Activated T-helper 1 cell treated with anti-CD3 and anti-CD28 coated beads, Interleukin-12 subunit alpha, Interleukin-12 subunit beta, Interleukin-2, Interleukin-4 antibody, amounts not matched to agents 30 ng/mL and 10 ng/mL and 1 ng/mL, durations not matched to agents 14 hours and 24 hours and 36 hours (primary cell): ENCODE measurements at regions of chr15 and their contacts with region 1.

Region 1: DNA sequence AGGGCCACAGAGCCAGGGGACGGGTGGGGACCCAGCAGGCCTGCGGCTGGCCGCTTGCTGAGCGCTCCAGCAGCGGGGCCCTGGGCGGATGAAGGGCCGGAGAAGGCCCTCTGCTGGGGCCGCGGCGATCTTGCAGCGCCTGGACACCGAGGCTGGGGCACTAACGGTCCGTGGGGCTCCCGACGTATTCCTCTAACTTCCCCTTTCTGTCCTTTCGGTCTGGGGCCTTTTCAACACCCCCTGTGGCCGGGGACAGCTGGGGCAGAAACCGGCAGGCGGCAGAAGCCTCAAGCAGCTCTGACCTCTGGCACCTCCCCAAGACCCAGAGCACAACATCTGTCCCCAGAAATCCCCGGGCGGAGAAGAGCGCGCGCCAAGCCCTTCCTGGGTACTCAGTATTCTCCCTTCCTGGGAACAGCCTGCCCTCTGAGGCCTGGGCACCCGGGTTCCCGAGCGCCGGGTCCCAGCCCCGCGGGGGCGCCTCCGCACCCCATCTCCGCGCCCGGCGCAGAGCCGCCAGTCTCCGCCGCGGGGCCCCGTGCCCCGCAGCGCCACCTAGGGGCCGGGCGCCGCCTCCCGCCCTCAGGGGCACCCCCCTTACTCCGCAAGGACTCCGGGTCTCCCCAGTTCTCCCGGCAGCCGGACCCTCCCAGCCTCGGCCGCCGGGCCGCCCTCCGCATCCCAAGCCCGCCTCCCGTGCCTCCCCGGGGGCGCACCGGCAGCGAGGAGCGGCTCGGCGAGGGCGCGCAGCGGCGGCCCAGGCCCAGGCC is 582 bp upstream of the SLCO3A1 start:
- DNase-seq: peak; percentile 74
- H3K4me3 Mint-ChIP-seq: peak overlapping the region; percentile 82
- H3K27ac Mint-ChIP-seq: peak overlapping the region; percentile 80
- H3K4me1 Mint-ChIP-seq: peaks cover 61% of the 10 kb centered on the region
- H3K27me3 Mint-ChIP-seq: peaks cover 9% of the 10 kb centered on the region

Region 2: GRCh38 chr15:90994417-90995311 is 858.3 kb before region 1 on chr15 and contains the start of gene PRC1:
- intact Hi-C with region 1: loop called (anchors 10 kb)
- DNase-seq: peak; percentile 99
- H3K4me3 Mint-ChIP-seq: peak within 1 kb of the TSS; percentile 100
- H3K27ac Mint-ChIP-seq: peak within 1 kb of the TSS; percentile 100
- H3K4me1 Mint-ChIP-seq: peaks cover 42% of the 10 kb centered on the region
- H3K27me3 Mint-ChIP-seq: no peaks in the 10 kb centered on the region
- total RNA-seq, gene PRC1: 78.4 and 86.0 TPM in 2 replicates

Region 3: DNA sequence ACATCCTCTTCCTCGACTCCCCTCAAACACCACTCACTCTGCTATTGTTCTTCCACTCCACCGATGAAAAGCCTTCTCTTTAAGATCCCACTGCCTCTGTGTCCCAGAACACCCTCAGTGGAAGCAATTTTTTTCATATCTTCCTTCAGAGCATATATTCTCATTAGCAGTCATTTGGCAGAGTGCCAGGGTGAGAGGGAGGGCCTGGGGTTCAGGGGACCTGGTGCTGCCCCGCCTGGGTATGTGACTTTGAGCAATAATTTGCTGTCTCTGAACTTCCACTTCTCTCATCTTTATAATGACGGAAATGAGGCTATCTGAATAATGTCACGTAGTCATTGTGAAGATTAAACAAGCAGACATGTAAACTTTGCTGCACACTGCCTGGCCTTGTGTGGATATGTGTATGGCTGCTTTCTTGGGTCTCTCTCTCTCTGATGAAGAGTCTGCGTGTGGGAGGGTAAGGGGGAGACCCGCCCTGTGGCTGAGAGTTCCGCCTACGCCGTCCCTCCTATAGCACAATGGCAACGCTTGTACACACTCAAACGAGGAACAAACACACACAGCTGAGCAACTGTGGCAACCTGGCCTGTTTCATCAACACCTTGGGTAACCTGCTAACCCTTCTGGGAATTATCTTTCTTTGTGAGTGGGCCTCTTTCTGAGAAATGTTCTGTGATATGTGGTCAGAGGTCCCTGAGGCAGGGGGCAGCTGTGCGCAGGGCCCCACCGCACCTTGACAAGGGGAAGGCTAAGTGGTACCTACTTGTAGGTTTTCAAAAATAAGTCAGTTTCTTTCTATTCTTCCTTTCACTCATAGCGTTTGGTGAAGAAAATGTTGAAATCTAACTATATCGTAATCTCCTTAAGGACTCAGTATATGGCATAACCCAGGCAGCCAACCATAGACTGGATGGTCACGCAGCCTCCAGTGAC is 383.0 kb before region 1 on chr15:
- intact Hi-C with region 1: loop called (anchors 1 kb)
- DNase-seq: peak; percentile 63
- H3K4me3 Mint-ChIP-seq: peak overlapping the region; percentile 1
- H3K27ac Mint-ChIP-seq: peak overlapping the region; percentile 67
- H3K4me1 Mint-ChIP-seq: peaks cover 50% of the 10 kb centered on the region
- H3K27me3 Mint-ChIP-seq: no peaks in the 10 kb centered on the region

Region 4: GRCh38 chr15:91921188-91921842 is 68.4 kb after region 1 on chr15:
- intact Hi-C with region 1: loop called (anchors 5 kb)
- DNase-seq: no peak
- H3K4me3 Mint-ChIP-seq: peak overlapping the region; percentile 31
- H3K27ac Mint-ChIP-seq: peak overlapping the region; percentile 50
- H3K4me1 Mint-ChIP-seq: peaks cover 38% of the 10 kb centered on the region
- H3K27me3 Mint-ChIP-seq: no peaks in the 10 kb centered on the region

Region 5: GRCh38 chr15:91936182-91936775 is 83.4 kb after region 1 on chr15:
- intact Hi-C with region 1: no loop called
- DNase-seq: no peak
- H3K4me3 Mint-ChIP-seq: no peak overlapping the region
- H3K27ac Mint-ChIP-seq: no peak overlapping the region
- H3K4me1 Mint-ChIP-seq: peaks cover 22% of the 10 kb centered on the region
- H3K27me3 Mint-ChIP-seq: no peaks in the 10 kb centered on the region

Region 6: GRCh38 chr15:92011611-92012367 is 158.9 kb after region 1 on chr15:
- intact Hi-C with region 1: loop called (anchors 2 kb)
- DNase-seq: no peak
- H3K4me3 Mint-ChIP-seq: no peak overlapping the region
- H3K27ac Mint-ChIP-seq: peak overlapping the region; percentile 50
- H3K4me1 Mint-ChIP-seq: peaks cover 46% of the 10 kb centered on the region
- H3K27me3 Mint-ChIP-seq: peaks cover 2% of the 10 kb centered on the region

Region 7: DNA sequence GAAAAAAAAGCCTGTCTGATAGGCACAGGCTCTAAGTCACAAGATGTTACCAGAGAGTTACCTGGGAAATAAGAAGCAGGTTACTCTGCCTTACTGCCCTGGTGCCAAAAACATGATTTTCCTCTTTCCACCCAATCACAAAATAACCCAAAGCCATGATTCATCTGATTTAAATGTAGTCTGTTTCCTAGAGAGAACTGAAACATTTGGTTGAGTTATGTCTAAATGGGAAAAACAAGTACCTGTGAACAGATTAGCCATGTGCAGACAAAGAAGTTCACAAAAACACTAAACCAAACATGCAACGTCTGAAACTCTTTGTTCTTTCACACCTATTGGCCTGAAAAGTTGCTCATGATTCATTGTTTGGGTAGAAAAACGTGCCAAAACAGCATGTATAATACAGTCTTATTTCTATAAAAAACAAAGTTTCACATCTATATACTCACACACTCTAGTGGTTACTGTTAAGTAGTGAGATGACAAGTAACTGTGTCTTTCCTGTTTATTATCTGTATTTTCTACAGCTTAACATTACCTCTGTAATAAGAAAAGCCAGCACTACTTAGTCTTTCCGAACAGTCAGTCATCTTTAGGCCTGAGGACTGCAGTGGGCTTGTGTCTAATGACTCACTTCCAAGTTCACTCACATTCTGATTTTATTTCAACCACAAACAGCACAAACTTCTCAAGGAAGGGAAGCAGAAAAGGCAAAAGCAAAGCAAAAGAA is 772.5 kb after region 1 on chr15:
- intact Hi-C with region 1: loop called (anchors 10 kb)
- DNase-seq: no peak
- H3K4me3 Mint-ChIP-seq: peak overlapping the region; percentile 27
- H3K27ac Mint-ChIP-seq: peak overlapping the region; percentile 74
- H3K4me1 Mint-ChIP-seq: peaks cover 15% of the 10 kb centered on the region
- H3K27me3 Mint-ChIP-seq: peaks cover 5% of the 10 kb centered on the region

Region 8: DNA sequence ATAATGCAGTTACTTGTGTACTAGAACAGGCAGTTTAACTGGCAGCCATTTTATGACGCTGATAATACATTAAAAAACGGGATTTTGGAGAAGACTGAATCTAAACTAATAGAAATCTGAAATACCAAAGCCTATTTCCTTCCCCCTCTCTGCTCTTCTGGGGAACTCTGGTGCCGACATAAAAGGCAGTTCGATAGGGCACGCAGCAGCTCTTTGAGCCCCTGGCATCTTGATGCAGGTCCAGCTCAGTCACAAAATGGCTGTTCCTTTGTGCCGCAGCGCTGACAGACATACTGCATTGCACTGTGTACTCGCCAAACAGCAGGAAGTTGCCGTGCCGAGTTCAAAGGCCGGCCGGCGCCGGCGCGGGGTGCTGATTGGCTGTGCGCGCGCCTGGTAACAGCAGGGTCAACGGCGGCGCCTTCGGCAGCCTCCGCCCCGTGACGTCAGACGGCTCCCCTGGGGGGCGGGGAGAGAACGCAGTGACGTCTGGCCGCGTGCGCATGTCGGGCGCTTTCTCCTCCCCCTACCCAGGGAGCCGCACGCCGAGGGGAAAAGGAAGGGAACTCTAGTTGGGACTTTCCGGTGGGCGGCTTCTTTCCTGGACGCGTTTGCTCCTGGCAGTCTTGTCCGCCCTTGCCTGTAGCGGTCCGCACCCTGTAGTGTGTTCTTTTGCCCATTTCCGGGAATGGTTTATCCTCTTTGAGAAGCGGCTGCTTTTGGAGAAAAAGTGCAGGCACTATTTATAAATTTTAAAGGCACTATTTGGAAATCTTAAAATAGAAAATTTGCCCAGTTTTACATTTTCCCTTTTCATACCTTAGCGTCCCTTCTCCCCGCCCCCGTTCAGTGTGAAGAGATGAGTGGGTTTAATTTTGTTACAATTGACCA is 1051.3 kb after region 1 on chr15:
- intact Hi-C with region 1: loop called (anchors 10 kb)
- DNase-seq: peak; percentile 99
- H3K4me3 Mint-ChIP-seq: peak overlapping the region; percentile 93
- H3K27ac Mint-ChIP-seq: peak overlapping the region; percentile 100
- H3K4me1 Mint-ChIP-seq: peaks cover 67% of the 10 kb centered on the region
- H3K27me3 Mint-ChIP-seq: no peaks in the 10 kb centered on the region